H1 (cell line): ENCODE measurements at regions of chr2 and their contacts with region 1.

Region 1: DNA sequence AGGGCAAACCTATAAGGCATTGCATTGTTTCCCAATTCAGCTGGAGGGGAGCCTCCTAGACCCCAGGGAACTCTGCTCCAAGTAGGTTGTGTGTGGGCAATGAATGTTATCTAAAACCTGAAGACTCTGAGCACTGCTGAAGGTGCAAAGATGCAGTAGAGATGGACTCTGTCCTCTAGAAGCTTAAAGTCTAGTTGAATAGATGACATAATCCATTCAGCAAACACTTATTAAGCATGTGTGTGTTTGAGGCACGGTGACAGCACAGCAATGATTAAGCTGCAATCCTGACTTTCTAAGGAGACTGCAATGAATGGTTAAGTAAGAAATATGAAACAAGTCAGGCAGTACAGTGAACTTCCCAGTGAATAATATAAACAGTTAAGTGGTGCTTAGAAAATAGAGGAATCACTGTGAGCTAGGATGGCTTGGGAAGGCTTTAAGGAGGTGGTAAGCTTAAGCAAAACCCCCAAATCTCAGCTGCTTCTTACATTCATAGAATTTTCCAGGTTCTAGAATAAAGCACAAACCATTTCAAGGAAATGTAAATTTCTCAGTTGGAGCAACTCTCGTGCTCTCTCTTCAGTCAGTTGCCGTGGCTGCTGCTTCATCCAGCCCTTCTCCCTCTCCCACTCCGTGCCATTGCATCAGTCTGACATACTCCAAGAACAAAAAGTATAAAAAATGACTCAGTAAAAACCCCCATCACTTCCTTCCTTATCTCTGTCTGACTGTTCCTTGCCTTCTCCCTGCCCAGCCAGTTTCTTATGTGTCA is 19.1 kb downstream of the MXD1 start:
- DNase-seq: no peak
- H3K4me3 ChIP-seq: no peak overlapping the region
- H3K27ac ChIP-seq: no peak overlapping the region
- H3K4me1 ChIP-seq: peaks cover 0 to 6% (median 3%) of the 10 kb centered on the region in 4 experiments; a peak in 3 of 7 replicates
- H3K27me3 ChIP-seq: no peaks in the 10 kb centered on the region
- CTCF ChIP-seq: no peak
- EP300 ChIP-seq: no peak
- POLR2A ChIP-seq: no peak
- RAD21 ChIP-seq: no peak

Region 2: GRCh38 chr2:69902213-69902922 is 31.7 kb before region 1 on chr2:
- CTCF ChIA-PET with region 1: no interaction called
- POLR2A ChIA-PET with region 1: no interaction called
- DNase-seq: no peak
- H3K4me3 ChIP-seq: no peak overlapping the region
- H3K27ac ChIP-seq: no peak overlapping the region
- H3K4me1 ChIP-seq: no peaks in the 10 kb centered on the region
- H3K27me3 ChIP-seq: no peaks in the 10 kb centered on the region
- CTCF ChIP-seq: no peak
- EP300 ChIP-seq: no peak
- POLR2A ChIP-seq: no peak
- RAD21 ChIP-seq: no peak

Region 3: DNA sequence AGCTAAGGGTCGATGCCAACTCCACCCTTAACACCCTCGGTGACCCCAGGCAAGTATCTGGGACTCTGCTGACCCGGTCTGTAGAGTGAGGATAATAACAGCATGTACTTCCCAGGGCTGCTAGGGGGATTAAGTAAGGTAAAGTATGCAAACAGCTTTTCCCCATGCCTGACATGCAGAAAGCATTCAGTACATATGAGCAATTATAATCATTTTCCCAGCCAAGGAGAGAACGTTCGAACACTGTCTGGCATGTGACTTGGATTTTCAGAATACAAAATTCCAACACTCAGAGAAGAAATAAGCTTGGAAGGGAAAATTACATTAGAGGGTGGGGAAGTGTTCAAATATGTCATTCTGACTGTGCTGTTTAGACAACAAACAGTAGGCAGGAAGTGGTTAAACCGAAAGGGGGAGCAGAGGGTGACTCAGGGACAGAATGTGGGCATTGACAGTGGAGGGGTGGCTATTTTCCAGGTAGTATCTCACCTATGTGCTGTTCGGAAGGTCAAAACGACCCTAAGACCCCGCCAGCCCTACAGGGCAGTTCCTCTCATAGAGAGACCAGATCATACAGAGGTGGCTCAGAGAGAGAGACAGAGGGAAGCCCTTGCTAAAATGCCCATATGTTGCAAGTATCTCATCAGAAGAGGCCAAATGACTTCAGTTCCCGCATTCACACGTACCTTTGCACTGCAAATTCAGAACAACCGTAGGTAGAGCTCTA is 12.5 kb after region 1 on chr2:
- CTCF ChIA-PET with region 1: interaction called, 10 read pairs
- POLR2A ChIA-PET with region 1: interaction called, 6 read pairs
- DNase-seq: no peak
- H3K4me3 ChIP-seq: no peak overlapping the region
- H3K27ac ChIP-seq: no peak overlapping the region
- H3K4me1 ChIP-seq: peaks cover 0 to 3% (median 0%) of the 10 kb centered on the region in 4 experiments; a peak in 1 of 7 replicates
- H3K27me3 ChIP-seq: no peaks in the 10 kb centered on the region; a peak in 1 of 7 replicates
- CTCF ChIP-seq: no peak
- EP300 ChIP-seq: no peak
- POLR2A ChIP-seq: no peak
- RAD21 ChIP-seq: no peak